ENCODE measurements at regions of chr22 and their contacts with region 1.

Region 1: GRCh38 chr22:29040385-29041275 is 21.0 kb downstream of the C22orf31 start:
- H3K4me3 ChIP-seq: no peak overlapping the region
- H3K27ac ChIP-seq: no peak overlapping the region
- H3K4me1 ChIP-seq: no peaks in the 10 kb centered on the region
- CTCF ChIP-seq: peak; percentile 63; the same call in 1 of the 2 replicates

Region 2: DNA sequence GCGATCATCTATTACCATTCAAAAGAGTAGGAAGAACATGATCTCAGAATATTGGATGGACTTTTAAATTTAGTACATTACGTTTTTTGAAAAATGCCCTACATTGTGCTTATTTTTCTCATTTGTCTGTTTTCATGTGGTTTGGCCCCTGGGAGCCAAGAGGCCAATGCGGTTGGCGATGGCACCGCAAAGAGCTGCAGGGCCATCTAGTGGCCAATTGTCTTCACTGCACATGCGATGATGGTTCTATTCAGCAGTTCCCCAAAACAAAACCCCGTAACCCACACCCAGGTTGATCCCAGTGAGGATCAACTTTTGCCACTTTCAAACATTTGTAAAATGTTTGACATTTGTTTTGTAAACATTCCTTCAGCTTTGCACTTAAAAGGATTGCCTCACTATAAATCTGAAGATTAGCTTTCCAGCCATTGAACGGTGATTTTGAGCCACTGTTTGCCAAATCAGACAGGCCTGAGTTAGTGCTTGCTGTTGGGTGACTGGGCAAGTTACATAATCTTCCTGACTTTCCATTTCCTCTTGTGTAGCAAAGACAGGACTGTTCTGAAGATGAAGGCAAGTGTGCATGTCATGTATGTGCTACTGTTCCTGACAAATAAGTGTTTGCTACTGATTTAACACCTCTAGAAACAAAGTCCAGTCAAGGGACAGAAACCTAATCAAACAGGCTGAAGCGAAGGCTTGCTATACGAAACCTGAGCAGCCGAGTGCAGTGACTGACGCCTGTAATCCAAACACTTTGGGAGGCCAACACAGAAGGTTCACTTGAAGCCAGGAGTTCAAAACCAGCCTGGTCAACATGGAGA is 211.1 kb before region 1 on chr22:
- CTCF ChIA-PET with region 1: interaction called, 19 read pairs
- POLR2A ChIA-PET with region 1: no interaction called
- H3K4me3 ChIP-seq: no peak overlapping the region
- H3K27ac ChIP-seq: no peak overlapping the region
- H3K4me1 ChIP-seq: no peaks in the 10 kb centered on the region
- CTCF ChIP-seq: peak; percentile 87

Region 3: DNA sequence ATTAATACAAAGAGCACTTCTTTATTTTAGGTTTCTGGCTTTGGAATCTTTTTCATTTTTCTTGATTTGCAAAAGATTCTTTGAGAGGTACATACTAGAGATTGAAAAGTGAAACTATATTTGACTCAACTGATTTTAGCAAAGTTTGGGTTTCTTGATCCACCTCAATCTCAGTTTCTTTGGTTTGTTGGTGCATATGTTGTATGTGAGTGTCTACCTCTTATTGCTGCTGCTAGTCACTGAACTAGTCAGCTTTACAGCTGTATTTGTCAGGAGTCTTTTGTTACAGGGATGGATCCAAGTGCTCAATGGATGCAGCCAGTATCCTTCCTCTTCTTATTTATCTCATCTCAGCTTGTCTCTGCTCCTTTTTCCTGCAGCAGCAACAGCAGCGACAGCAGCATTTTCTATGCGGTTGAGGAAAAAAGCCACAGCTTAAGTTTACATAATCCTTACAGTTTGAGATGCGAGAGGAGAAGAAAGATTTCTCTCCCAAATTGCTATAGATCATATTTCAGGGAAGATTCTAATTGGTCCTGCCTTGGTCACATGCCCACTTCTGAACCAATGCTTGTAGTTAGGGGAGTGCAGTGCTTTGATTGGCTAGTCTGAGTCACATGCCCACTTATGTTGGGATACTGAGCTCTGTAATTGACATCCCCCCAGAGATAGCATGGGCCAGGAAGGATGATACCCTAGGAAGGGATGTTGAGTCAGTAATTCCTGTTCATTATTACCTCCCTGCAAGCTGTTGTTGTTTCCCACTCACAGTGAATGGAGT is 167.3 kb before region 1 on chr22:
- CTCF ChIA-PET with region 1: interaction called, 19 read pairs
- POLR2A ChIA-PET with region 1: interaction called, 3 read pairs
- H3K4me3 ChIP-seq: no peak overlapping the region
- H3K27ac ChIP-seq: no peak overlapping the region
- H3K4me1 ChIP-seq: no peaks in the 10 kb centered on the region
- CTCF ChIP-seq: no peak

Region 4: GRCh38 chr22:28943501-28943879 is 97.1 kb before region 1 on chr22:
- CTCF ChIA-PET with region 1: interaction called, 11 read pairs
- POLR2A ChIA-PET with region 1: no interaction called
- H3K4me3 ChIP-seq: no peak overlapping the region
- H3K27ac ChIP-seq: no peak overlapping the region
- H3K4me1 ChIP-seq: peaks cover 5% of the 10 kb centered on the region; the same call in 1 of the 2 replicates
- CTCF ChIP-seq: no peak

Region 5: DNA sequence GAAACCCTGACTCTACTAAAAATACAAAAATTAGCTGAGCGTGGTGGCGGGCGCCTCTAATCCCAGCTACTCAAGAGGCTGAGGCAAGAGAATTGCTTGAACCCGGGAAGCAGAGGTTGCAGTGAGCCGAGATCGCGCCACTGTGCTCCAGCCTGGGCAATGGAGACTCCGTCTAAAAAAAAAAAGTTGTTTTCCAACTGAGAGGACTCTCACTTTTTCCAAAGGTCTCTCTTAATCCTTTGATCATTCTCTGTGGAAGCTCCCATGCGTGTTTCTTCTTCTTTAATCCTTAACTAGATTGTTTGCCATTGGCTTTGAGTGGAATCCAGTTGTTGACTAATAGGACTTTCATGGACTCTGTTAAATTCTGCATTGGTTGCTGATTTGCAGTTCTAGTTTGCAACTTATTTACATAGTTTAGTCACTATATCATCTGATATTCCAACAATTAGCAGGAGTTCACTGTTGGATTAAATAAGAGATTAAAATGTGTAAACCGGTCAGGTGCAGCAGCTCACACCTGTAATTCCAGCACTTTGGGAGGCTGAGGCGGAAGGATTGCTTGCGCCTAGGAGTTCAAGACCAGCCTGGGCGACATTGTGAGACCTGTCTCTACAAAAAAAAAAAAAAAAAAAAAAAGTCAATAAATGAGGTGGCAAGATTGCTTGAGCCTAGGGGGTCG is 58.7 kb before region 1 on chr22:
- CTCF ChIA-PET with region 1: no interaction called
- POLR2A ChIA-PET with region 1: interaction called, 10 read pairs
- H3K4me3 ChIP-seq: no peak overlapping the region
- H3K27ac ChIP-seq: no peak overlapping the region
- H3K4me1 ChIP-seq: peaks cover 32% of the 10 kb centered on the region
- CTCF ChIP-seq: no peak

Region 6: GRCh38 chr22:29154364-29155048 is 113.9 kb after region 1 on chr22:
- CTCF ChIA-PET with region 1: interaction called, 17 read pairs
- POLR2A ChIA-PET with region 1: no interaction called
- H3K4me3 ChIP-seq: no peak overlapping the region
- H3K27ac ChIP-seq: no peak overlapping the region
- H3K4me1 ChIP-seq: no peaks in the 10 kb centered on the region
- CTCF ChIP-seq: peak; percentile 95